WTC11 (cell line): ENCODE measurements at regions of chr20 and their contacts with region 1.

Region 1: DNA sequence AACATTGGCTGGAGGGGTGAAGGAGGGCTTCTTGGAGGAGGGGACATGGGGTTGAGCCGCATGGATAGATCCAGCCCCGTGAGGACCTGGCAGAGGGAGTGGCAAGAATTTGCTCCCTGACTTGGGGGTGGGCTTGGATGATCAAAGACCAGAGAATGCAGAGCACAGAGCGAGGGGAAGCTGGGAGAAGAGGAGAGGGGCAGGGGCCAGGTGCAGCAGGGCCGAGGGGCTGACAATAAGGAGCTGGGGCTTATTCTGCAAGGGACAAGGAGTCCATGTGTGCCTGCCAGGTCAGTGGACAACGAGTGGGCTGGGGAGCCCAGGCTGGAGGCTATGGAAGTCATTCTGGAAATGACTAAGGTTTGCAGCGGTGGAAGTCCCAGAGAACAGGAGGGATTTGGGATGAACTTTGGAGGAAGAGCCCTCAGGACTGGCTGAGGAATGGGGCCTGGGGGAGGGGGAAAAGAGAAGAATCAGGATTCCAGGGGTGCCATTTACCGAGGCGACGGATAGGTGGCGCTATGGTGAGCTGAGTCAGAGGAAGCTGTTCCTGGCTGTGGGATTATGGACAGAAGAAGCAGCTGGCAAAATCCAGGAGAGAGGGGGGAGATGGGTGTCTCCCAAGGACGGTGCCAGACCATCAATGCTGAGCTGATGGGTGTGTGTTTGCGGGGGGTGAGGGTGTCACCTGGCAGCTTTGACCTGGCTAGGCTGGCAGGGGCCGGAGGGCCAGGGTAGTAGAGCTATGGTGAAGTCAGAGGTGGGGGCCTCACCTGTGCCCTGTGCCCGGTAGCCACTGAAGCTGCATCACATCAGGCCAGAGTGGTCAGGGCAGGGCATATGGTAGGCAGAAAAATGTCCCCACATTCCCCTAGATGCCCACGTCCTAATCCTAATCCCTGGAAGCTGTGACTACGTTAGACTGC is 7.8 kb downstream of the KCNG1 start:
- DNase-seq: peak; percentile 89
- ATAC-seq: peak; percentile 87
- H3K4me3 Mint-ChIP-seq: no peak overlapping the region
- H3K27ac Mint-ChIP-seq: no peak overlapping the region
- H3K4me1 Mint-ChIP-seq: peaks cover 29% of the 10 kb centered on the region
- H3K27me3 Mint-ChIP-seq: no peaks in the 10 kb centered on the region
- CTCF ChIP-seq: peak; percentile 71

Region 2: DNA sequence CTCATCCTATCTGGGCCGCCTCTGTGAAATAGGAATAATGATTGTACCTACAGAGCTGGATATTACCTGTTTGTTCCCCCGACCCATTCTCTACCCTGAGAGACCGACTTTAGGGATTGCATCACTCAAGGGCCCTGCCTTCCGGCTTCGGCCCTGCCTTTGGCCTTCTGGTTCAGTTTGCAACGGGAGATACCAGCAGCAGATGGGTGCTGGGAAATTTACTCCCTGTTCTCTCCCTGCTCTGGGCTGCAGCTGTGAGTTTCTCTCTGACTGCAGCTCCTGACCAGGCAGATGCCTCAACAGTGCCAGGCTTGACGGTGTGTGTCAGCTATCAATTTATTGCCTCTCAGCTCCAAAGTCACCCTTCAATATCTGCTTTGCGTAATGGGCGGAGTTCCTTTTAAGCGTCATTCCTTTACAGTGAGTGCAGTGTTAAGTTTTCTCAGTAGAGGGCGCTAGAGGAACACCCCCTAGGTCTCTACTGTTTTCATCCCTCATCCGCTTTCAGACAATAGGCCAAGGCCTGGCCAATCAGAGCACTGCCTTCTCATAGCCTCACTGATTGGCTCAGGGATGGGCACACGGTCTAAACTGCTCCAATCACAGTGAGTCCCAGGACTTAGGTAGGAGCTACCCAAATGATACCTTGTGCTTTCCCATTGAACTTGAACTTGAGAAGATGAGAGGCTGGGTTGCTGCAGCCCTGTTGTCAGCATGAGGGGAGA is 22.2 kb before region 1 on chr20:
- CTCF ChIA-PET with region 1: interaction called, 101 read pairs
- POLR2A ChIA-PET with region 1: interaction called, 4 read pairs
- DNase-seq: peak; percentile 74
- ATAC-seq: peak; percentile 91
- H3K4me3 Mint-ChIP-seq: peak overlapping the region; percentile 52
- H3K27ac Mint-ChIP-seq: peak overlapping the region; percentile 98
- H3K4me1 Mint-ChIP-seq: peaks cover 40% of the 10 kb centered on the region
- H3K27me3 Mint-ChIP-seq: peaks cover 5% of the 10 kb centered on the region
- CTCF ChIP-seq: peak; percentile 89

Region 3: GRCh38 chr20:51042654-51043247 is 27.7 kb after region 1 on chr20:
- CTCF ChIA-PET with region 1: interaction called, 19 read pairs
- POLR2A ChIA-PET with region 1: no interaction called
- DNase-seq: peak; percentile 65
- ATAC-seq: peak; percentile 93
- H3K4me3 Mint-ChIP-seq: no peak overlapping the region
- H3K27ac Mint-ChIP-seq: no peak overlapping the region
- H3K4me1 Mint-ChIP-seq: no peaks in the 10 kb centered on the region
- H3K27me3 Mint-ChIP-seq: no peaks in the 10 kb centered on the region; the same call in 1 of the 2 replicates
- CTCF ChIP-seq: 0 out of 2 replicates have a peak, but pooled peaks have one; percentile 27

Region 4: DNA sequence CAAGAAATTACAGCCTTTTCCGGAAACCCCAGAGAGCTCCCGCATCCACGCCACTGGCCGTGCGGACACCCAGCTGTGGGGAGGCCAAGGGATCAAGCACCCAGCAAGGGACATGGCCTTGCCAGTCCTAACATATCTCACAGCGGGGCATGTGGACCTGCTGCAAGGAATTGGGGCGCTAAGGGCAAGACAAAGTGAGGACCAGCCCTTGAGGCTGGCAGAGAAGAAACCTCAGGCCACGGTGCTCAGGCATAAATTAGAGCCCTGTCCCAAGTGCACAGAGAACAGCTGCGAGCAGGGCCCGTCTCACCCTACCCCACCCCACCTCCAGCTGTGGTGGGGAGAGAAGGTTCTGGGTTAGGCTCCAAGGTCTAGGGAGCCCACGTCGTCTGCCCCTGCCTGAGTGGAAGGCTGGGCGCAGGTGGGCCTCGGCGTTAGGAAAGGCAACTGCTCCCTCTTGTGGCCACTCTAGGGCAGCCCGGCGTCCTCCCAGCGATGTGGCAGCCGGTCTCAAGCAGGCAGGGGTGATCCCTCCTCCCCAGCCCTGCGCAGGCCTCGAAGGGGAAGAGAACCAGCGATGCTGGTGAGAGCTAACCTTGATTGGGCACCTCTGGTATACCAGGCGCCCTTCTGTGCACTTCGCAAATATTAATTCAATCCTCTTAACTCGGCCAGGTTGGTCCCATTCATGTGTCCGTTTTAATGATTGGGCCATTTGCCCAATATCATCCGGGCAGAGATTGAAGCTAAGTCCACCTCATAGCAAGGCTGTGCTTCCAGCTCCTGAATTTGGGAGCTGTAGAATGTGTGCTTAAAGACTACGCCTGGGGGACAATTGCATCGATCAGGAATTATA is 291.7 kb after region 1 on chr20:
- CTCF ChIA-PET with region 1: interaction called, 54 read pairs
- POLR2A ChIA-PET with region 1: interaction called, 3 read pairs
- DNase-seq: peak; percentile 87
- ATAC-seq: peak; percentile 72
- H3K4me3 Mint-ChIP-seq: no peak overlapping the region
- H3K27ac Mint-ChIP-seq: 0 out of 2 replicates have a peak overlapping the region, but pooled peaks have one; percentile 80
- H3K4me1 Mint-ChIP-seq: peaks cover 61% of the 10 kb centered on the region
- H3K27me3 Mint-ChIP-seq: peaks cover 43% of the 10 kb centered on the region
- CTCF ChIP-seq: peak; percentile 88

Region 5: DNA sequence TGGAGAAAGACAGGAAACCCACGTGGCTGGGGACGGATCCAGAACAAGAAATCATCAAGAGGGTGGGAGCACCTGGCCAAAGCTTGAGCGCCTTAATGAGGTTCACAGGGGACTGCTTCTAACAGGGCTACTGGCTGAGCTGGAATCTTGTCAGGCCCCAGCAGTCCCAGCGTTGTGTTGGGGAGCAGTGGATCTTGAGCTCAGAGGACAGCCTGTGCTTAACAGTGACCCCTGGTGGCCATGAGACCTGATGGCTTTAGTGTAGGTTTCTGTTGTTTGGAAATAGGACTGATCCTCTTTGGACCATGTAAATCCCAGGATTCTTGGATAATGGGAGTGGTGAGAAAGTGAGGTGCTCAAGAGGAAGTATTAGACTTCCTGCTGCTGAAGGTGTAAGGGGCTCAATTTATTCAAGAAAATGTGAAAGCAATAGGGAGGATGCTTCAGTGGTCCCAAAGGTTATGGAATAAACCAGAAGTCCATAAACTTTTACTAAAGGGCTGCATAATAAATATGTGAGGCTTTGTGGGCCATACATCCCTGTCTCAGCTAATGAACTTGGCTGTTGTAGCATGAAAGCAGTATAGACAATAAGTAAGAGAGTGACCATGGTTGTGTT is 311.2 kb after region 1 on chr20:
- CTCF ChIA-PET with region 1: interaction called, 18 read pairs
- POLR2A ChIA-PET with region 1: no interaction called
- DNase-seq: peak; percentile 76
- ATAC-seq: peak; percentile 91
- H3K4me3 Mint-ChIP-seq: no peak overlapping the region
- H3K27ac Mint-ChIP-seq: no peak overlapping the region
- H3K4me1 Mint-ChIP-seq: peaks cover 16% of the 10 kb centered on the region
- H3K27me3 Mint-ChIP-seq: peaks cover 3% of the 10 kb centered on the region; the same call in 1 of the 2 replicates
- CTCF ChIP-seq: peak; percentile 37; the same call in 1 of the 2 replicates